Naive thymus-derived CD4-positive, alpha-beta T cell (primary cell): ENCODE measurements at regions of chr20 and their contacts with region 1.

Region 1: DNA sequence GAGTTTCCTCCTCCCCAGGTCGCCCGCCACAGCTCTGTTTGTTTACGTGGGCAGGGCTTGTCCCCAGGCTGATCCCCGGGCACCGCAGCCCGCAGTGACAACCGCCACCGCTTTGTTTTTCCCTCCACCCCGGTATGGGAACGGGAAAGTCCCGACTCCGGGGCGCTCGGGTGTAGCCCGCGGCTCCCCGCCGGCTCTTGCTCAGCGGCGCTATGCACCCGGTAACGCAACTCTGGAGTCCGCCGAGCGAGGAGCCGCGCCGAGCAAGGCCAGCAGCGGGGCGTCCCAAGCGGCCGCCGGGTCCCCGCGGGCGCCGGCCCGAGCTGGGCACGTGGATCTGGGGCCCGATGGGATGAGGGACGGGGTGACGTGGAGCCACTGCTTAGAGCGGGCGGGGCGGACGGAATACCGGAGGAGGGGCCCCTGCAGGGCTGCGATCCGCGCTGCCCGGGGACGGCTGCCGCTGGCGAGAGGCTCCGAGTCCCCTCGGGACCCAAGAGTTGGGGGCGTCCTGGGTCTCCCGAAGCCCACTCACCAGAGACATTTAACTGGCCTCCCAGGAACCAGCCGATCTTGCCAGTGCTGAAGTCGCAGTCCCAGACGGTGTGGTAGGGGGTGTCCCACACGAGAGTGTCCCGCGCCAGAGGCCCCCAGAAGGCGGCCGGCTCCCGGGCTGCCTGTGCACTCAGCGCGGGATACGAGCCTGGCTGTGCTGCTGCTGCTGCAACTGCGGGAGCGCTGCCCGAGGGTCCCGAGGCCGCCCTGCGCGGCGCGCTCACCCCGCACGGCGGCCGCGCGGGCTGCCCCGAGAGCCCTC is 497 bp downstream of the ACSS1 start:
- DNase-seq: peak; percentile 67 to 86 (median 74)
- ATAC-seq: peak; percentile 77
- H3K4me3 ChIP-seq: peak overlapping the region; percentile 86
- H3K4me3 Mint-ChIP-seq: peak overlapping the region; percentile 81 to 90 (median 88)
- H3K27ac ChIP-seq: peak overlapping the region; percentile 87
- H3K27ac Mint-ChIP-seq: peak overlapping the region; percentile 72 to 94 (median 88)
- H3K4me1 ChIP-seq: peaks cover 33 to 48% of the 10 kb centered on the region in 2 donors
- H3K4me1 Mint-ChIP-seq: peaks cover 38 to 63% (median 47%) of the 10 kb centered on the region in 7 donors
- H3K27me3 ChIP-seq: no peaks in the 10 kb centered on the region
- H3K27me3 Mint-ChIP-seq: peaks cover 0 to 29% (median 0%) of the 10 kb centered on the region in 5 donors

Region 2: DNA sequence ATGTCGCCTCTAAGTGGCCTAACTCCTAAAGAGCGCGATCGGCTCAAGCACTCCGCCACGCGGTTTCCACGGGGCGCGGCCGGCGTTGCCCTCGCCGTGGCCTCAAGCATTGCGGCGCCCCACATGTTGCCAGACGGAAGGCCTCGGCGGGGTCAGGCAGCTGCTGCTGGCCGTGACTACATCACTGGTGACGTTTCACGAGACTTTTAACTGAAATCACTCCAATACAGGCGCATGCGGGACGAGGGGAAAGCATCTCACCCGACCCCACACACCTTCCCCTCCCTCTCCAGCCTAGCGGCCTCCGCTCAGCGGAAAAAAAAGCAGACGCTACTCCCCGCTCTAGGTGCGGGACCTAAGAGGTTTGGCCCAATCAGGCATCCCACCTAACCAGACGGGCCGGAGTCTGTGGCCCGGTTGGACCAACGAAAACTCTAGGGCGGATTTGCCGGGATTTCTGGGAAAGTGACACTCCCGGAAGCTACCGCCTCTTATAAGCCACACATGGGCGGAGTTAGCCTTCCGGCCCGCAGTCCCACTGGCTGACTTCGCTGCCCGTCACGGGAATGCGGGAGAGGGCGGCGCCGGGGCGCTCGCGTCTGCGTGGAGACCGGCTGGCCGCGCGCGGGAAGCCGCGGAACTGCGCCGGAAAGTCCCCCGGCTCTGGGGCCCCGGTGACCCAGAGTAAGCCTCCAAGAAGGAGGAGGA is 1707.1 kb before region 1 on chr20 and contains the start of gene NXT1:
- CTCF ChIA-PET with region 1: no interaction called
- POLR2A ChIA-PET with region 1: interaction called, 4 read pairs
- intact Hi-C with region 1: loop called in 1 of 2 experiments (anchors 2 kb)
- DNase-seq: peak; percentile 92 to 98 (median 95)
- ATAC-seq: peak; percentile 91
- H3K4me3 ChIP-seq: peak within 1 kb of the TSS; percentile 99
- H3K4me3 Mint-ChIP-seq: peak within 1 kb of the TSS; percentile 84 to 100 (median 98)
- H3K27ac ChIP-seq: peak within 1 kb of the TSS; percentile 99
- H3K27ac Mint-ChIP-seq: peak within 1 kb of the TSS; percentile 98 to 100 (median 100)
- H3K4me1 ChIP-seq: peaks cover 19 to 20% of the 10 kb centered on the region in 2 donors
- H3K4me1 Mint-ChIP-seq: peaks cover 12 to 36% (median 26%) of the 10 kb centered on the region in 7 donors
- H3K27me3 ChIP-seq: no peaks in the 10 kb centered on the region
- H3K27me3 Mint-ChIP-seq: peaks cover 0 to 2% (median 0%) of the 10 kb centered on the region in 5 donors
- total RNA-seq, gene NXT1: 20.1 to 63.4 (median 39.7) TPM

Region 3: DNA sequence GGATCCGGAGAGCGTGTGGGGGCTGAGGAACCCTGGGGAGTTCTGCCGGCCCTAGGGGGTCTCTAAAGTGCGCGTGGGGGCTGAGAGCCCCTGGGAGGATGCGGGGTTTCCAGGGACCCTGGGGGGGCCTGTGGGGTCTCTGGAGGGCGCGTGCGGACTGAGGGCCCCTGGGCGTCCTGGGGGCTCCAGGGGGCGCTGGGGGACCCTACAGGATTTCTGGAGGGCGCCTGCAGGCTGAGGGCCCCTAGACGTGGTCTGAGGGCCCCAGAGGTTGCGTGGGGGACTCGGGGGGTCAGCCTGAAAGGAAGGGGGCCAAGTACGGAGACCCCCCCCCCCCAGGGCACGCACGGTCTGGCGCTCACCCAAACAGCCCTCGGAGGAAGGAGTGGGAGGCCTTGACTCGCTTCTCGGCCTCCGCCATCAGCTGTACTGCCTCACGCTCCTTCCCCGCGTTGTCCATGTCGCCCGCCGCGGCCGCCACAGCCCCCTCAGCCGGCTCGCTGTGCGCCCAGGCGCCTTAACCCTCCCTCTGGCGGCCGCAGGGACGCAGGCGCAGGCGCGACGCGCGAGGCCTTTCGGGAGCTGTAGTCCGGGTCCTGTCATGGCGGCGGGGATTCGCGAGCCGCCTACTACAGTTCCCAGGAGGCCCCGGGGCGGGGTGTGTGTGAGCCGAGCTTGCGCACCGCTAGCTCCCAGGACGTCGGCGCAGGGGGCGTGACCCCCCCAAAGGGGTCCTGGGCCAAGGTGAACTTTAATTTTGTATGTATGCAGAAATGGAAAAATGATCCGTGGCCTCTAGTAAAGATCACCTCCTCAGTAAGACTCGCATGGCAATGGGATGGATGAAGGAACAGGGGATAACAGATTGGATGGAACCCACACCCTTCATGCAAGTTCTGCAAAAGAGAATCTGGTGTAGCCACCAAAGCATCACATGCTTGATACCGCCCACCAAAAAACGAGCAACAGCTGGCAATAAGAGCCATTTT is 1636.2 kb before region 1 on chr20 and contains the start of gene NAPB:
- CTCF ChIA-PET with region 1: no interaction called
- POLR2A ChIA-PET with region 1: no interaction called
- intact Hi-C with region 1: loop called in 1 of 2 experiments (anchors 5 kb)
- DNase-seq: peak; percentile 82 to 93 (median 91)
- ATAC-seq: peak; percentile 99
- H3K4me3 ChIP-seq: peak within 1 kb of the TSS; percentile 84
- H3K4me3 Mint-ChIP-seq: peak within 1 kb of the TSS; percentile 86 to 96 (median 92)
- H3K27ac ChIP-seq: peak within 1 kb of the TSS; percentile 87
- H3K27ac Mint-ChIP-seq: peak within 1 kb of the TSS; percentile 55 to 95 (median 89)
- H3K4me1 ChIP-seq: peaks cover 7 to 22% of the 10 kb centered on the region in 2 donors
- H3K4me1 Mint-ChIP-seq: peaks cover 21 to 55% (median 39%) of the 10 kb centered on the region in 7 donors
- H3K27me3 ChIP-seq: no peaks in the 10 kb centered on the region
- H3K27me3 Mint-ChIP-seq: peaks cover 0 to 11% (median 6%) of the 10 kb centered on the region in 5 donors
- total RNA-seq, gene NAPB: 11.4 to 20.4 (median 16.2) TPM

Region 4: GRCh38 chr20:24948939-24949679 is 108.3 kb before region 1 on chr20 and contains the start of gene CST7:
- CTCF ChIA-PET with region 1: no interaction called
- POLR2A ChIA-PET with region 1: no interaction called
- intact Hi-C with region 1: loop called (anchors 1 kb)
- DNase-seq: peak; percentile 33 to 85 (median 77)
- ATAC-seq: peak; percentile 90
- H3K4me3 ChIP-seq: peak within 1 kb of the TSS; percentile 66
- H3K4me3 Mint-ChIP-seq: peak within 1 kb of the TSS in 9 of 10 donors; percentile 27 to 94 (median 54)
- H3K27ac ChIP-seq: no peak within 1 kb of the TSS
- H3K27ac Mint-ChIP-seq: peak within 1 kb of the TSS; percentile 21 to 94 (median 80)
- H3K4me1 ChIP-seq: peaks cover 6 to 33% of the 10 kb centered on the region in 2 donors
- H3K4me1 Mint-ChIP-seq: peaks cover 12 to 75% (median 25%) of the 10 kb centered on the region in 7 donors
- H3K27me3 ChIP-seq: no peaks in the 10 kb centered on the region
- H3K27me3 Mint-ChIP-seq: no peaks in the 10 kb centered on the region
- total RNA-seq, gene CST7: 1.4 to 74.9 (median 11.5) TPM

Region 5: DNA sequence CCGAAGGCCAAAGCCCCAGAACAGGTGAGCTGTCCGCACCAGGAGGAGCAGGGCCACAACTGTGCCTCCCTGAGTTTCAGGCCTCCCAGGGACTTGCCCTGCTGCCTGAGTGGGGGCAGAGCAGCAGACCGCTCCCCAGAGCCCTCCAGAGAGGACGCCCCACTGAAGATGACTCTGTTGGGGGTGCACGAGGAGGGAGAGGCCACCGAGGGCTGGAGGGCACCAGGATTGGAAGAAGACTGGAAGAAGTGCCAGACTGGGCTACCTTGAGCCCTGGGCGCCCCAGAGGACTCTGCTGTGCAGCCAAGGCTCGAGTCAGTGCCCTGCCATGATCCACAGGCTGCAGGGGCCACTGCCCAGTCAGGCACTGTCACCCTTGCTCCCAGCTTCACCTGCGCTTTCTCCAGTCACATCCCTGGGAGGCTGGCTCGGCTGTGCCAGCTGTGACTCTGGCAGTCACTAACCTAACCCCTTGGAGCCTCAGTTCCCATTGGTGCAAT is 97.1 kb before region 1 on chr20:
- CTCF ChIA-PET with region 1: no interaction called
- POLR2A ChIA-PET with region 1: no interaction called
- intact Hi-C with region 1: no loop called
- DNase-seq: no peak
- ATAC-seq: peak; percentile 4
- H3K4me3 ChIP-seq: no peak overlapping the region
- H3K4me3 Mint-ChIP-seq: peak overlapping the region in 1 of 10 donors; percentile 21
- H3K27ac ChIP-seq: no peak overlapping the region
- H3K27ac Mint-ChIP-seq: peak overlapping the region in 4 of 9 donors; percentile 25 to 79 (median 62)
- H3K4me1 ChIP-seq: peaks cover under 1 to 81% of the 10 kb centered on the region in 2 donors
- H3K4me1 Mint-ChIP-seq: peaks cover 0 to 28% (median 4%) of the 10 kb centered on the region in 7 donors
- H3K27me3 ChIP-seq: no peaks in the 10 kb centered on the region
- H3K27me3 Mint-ChIP-seq: no peaks in the 10 kb centered on the region

Region 6: GRCh38 chr20:25090492-25091429 is 33.3 kb after region 1 on chr20:
- CTCF ChIA-PET with region 1: interaction called, 8 read pairs
- POLR2A ChIA-PET with region 1: interaction called, 16 read pairs
- intact Hi-C with region 1: loop called in 1 of 2 experiments (anchors 2 kb)
- DNase-seq: peak in 8 of 9 donors; percentile 55 to 87 (median 82)
- ATAC-seq: peak; percentile 98
- H3K4me3 ChIP-seq: peak overlapping the region; percentile 36
- H3K4me3 Mint-ChIP-seq: peak overlapping the region; percentile 40 to 79 (median 66)
- H3K27ac ChIP-seq: peak overlapping the region; percentile 41
- H3K27ac Mint-ChIP-seq: peak overlapping the region; percentile 37 to 90 (median 75)
- H3K4me1 ChIP-seq: peaks cover 21 to 27% of the 10 kb centered on the region in 2 donors
- H3K4me1 Mint-ChIP-seq: peaks cover 12 to 56% (median 42%) of the 10 kb centered on the region in 7 donors
- H3K27me3 ChIP-seq: no peaks in the 10 kb centered on the region
- H3K27me3 Mint-ChIP-seq: peaks cover 6 to 19% (median 7%) of the 10 kb centered on the region in 5 donors

Region 7: DNA sequence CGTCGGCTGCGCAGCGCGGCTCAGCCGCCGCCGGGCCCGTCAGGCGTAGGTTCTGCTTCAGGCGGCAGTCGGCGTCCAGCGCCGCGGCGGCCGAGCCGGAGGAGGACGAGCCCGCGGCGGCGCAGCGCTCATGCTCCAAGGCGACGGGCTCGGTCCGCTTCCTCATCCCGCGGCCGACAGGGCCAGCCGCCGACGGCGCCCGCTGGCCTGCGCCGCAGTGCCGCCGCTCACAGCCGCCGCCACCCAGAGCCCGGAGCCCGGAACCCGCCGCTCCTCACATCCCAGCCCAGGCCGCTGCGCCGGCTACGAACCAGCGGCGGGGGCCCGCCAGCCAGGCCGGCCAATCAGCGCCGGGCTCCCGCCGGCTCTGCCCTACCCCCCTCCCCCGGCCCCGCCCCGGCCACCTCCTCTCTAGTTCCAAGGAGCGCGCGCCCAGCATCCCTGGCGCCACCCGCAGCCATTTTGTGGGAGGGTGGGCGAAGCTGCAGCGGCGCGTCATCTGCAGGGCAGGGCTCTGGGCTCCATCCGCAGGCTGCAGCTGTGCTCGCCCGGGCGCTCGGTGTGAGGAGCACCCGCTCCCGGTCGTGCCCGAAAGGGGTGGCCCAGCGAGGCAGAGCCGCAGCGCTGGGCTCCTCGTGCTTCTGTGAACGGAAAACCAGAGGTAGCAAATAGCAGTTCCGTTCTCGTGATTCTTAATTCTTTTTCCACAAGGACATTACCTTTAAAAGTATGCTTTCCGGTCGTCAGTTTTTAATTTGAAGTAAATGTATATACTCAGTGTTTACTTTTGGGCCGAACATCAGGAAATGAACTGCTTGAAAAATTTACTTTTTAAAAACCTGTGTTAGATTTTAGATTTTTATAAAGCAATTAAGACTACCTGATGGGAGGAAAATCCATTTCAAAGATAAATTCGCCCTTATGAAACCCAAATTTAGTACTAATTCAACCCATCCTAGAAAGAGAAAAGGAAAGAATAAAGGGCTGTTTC is 333.4 kb after region 1 on chr20 and contains the start of gene ABHD12:
- CTCF ChIA-PET with region 1: no interaction called
- POLR2A ChIA-PET with region 1: no interaction called
- intact Hi-C with region 1: loop called (anchors 1 kb)
- DNase-seq: peak; percentile 80 to 93 (median 89)
- ATAC-seq: peak; percentile 96
- H3K4me3 ChIP-seq: peak within 1 kb of the TSS; percentile 62
- H3K4me3 Mint-ChIP-seq: peak within 1 kb of the TSS; percentile 83 to 94 (median 88)
- H3K27ac ChIP-seq: peak within 1 kb of the TSS; percentile 74
- H3K27ac Mint-ChIP-seq: peak within 1 kb of the TSS; percentile 46 to 96 (median 82)
- H3K4me1 ChIP-seq: no peaks in the 10 kb centered on the region
- H3K4me1 Mint-ChIP-seq: peaks cover 5 to 22% (median 18%) of the 10 kb centered on the region in 7 donors
- H3K27me3 ChIP-seq: no peaks in the 10 kb centered on the region
- H3K27me3 Mint-ChIP-seq: peaks cover 0 to 6% (median 0%) of the 10 kb centered on the region in 5 donors
- total RNA-seq, gene ABHD12: 16.5 to 27.6 (median 22.5) TPM

Region 8: DNA sequence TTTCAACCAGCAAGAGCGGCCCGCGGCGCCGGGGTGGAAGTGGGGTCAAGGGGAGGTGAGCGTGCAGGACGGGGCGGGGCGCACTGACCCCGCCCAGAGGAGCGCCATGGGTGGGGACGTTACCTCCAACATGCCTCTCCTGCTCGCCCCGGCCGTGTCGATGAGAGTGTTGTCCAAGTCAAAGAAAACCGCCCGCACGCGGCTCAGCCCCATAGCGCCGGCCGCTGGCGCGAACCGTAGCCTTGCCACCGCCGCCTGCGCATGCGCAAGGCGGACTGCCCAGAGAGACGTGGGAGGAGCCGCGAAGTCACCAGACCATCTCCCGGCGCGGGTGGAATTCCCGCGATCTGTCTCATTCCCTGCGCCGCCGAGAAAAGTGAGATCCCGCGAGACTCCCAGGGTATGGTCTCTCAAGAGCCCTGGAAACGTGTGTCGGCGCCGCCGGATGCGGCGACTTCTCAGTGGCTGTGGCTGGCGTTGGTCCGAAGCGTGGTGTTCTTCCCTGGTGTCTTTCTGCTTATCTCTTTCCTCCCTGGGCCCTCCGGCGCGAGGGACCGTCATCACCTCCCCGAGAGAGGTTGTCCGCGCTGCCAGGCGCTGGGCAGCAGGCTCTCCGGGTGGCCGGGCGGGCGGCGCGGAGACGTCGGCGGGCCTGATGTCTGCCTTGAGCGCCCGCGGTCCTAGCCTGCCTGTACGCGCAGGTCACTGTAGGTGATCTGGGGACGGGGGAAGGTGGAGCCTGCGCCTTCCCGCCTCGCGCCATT is 566.5 kb after region 1 on chr20 and contains the start of gene NANP:
- CTCF ChIA-PET with region 1: no interaction called
- POLR2A ChIA-PET with region 1: no interaction called
- intact Hi-C with region 1: loop called (anchors 5 kb)
- DNase-seq: peak; percentile 62 to 92 (median 73)
- ATAC-seq: peak; percentile 86
- H3K4me3 ChIP-seq: peak within 1 kb of the TSS; percentile 96
- H3K4me3 Mint-ChIP-seq: peak within 1 kb of the TSS; percentile 86 to 96 (median 94)
- H3K27ac ChIP-seq: peak within 1 kb of the TSS; percentile 70
- H3K27ac Mint-ChIP-seq: peak within 1 kb of the TSS; percentile 78 to 96 (median 90)
- H3K4me1 ChIP-seq: peaks cover 0 to 12% of the 10 kb centered on the region in 2 donors
- H3K4me1 Mint-ChIP-seq: peaks cover 14 to 34% (median 18%) of the 10 kb centered on the region in 7 donors
- H3K27me3 ChIP-seq: no peaks in the 10 kb centered on the region
- H3K27me3 Mint-ChIP-seq: peaks cover 0 to 3% (median 0%) of the 10 kb centered on the region in 5 donors
- total RNA-seq, gene NANP: 1.0 to 7.0 (median 1.9) TPM